ENCODE measurements at regions of chr12 and their contacts with region 1.

Region 1: DNA sequence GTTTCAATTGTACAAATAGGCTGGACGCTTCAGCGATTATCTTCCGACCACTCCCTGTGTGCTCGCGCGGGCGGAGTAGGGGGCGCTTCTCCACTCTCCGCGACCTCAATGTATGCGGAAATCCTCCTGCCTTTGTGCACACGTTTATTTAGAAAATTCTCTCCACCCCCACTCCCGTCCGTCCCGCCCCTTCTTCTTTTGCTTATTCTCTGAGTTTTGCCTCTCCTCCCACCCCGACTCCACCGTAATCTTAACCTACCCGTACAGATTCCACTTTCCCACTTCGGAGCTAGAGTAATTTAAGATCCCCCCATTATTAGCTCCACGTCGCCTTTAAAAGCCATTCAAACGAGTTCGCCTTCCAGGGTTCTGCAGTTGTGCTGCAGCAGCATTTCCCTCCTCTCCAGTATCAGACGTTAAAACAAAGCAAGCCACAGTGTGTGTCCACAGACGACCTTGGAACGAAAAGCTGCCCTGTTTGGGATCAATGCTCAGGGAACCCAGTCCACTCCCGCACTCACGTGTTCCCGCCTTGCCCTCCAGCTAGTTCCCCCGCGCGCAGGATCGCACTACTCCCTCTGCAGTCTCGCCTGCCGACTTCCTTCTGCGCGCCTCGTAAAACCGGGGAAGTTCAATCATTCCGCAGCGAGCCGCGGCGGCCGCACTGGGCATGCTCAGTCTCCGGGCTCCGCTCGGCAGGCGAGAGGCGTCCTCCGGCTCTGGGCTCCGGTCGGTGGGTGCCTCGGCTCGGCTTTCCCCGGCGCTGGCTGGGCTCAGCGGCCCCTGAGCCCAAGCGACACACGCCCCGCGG is at the start of gene ANO6:
- DNase-seq: peak; percentile 93
- H3K4me3 ChIP-seq: peak within 1 kb of the TSS; percentile 53 to 88 (median 86)
- H3K27ac ChIP-seq: peak within 1 kb of the TSS; percentile 76
- H3K4me1 ChIP-seq: peaks cover 14% of the 10 kb centered on the region
- H3K27me3 ChIP-seq: no peaks in the 10 kb centered on the region
- CTCF ChIP-seq: peak in 1 of 2 donors; percentile 38
- POLR2A ChIP-seq: peak; percentile 61
- total RNA-seq, gene ANO6: 67.6 and 70.1 TPM in 2 replicates

Region 2: DNA sequence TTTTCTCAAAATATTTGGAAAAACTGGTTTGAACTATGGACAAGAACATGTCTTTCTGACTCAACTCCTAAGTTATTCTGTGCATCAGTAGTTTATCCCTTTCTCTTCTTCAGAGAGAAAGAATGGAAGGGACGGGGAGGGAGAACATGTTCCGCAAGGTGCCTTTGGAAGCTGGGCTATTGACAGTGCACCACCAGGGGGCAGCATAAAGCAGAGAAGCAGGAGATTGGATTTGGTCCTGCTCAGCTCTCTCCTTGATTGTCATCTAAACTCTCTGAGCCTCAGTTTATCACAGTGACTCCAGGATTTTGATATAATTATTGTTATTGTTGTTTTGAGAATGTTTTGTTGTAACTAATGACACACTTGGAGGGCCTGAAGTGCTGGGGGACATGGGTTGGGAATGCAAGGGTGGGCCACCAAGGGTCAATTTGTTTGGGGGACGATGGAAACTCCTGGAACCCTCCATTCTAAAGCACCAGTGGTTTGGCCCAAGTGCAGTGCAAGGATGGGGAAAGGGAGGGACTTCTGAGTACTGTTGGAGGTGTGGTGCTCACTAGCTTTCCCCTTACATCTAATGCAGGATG is 45.1 kb before region 1 on chr12:
- CTCF ChIA-PET with region 1: interaction called, 31 read pairs
- POLR2A ChIA-PET with region 1: no interaction called
- dilution Hi-C with region 1: no loop called
- intact Hi-C with region 1: loop called (anchors 2 kb)
- DNase-seq: peak; percentile 74
- H3K4me3 ChIP-seq: no peak overlapping the region
- H3K27ac ChIP-seq: no peak overlapping the region
- H3K4me1 ChIP-seq: no peaks in the 10 kb centered on the region
- H3K27me3 ChIP-seq: peaks cover 0 to 5% of the 10 kb centered on the region in 2 experiments
- CTCF ChIP-seq: peak; percentile 86 to 90
- POLR2A ChIP-seq: no peak

Region 3: GRCh38 chr12:45183246-45183645 is 32.4 kb before region 1 on chr12:
- CTCF ChIA-PET with region 1: interaction called, 19 read pairs
- POLR2A ChIA-PET with region 1: no interaction called
- dilution Hi-C with region 1: no loop called
- intact Hi-C with region 1: no loop called
- DNase-seq: peak; percentile 51
- H3K4me3 ChIP-seq: no peak overlapping the region
- H3K27ac ChIP-seq: no peak overlapping the region
- H3K4me1 ChIP-seq: no peaks in the 10 kb centered on the region
- H3K27me3 ChIP-seq: no peaks in the 10 kb centered on the region
- CTCF ChIP-seq: peak in 1 of 2 donors; percentile 28
- POLR2A ChIP-seq: no peak

Region 4: GRCh38 chr12:45191239-45191638 is 24.4 kb before region 1 on chr12:
- CTCF ChIA-PET with region 1: interaction called, 5 read pairs
- POLR2A ChIA-PET with region 1: no interaction called
- dilution Hi-C with region 1: no loop called
- intact Hi-C with region 1: loop called (anchors 1 kb)
- DNase-seq: peak; percentile 35
- H3K4me3 ChIP-seq: no peak overlapping the region
- H3K27ac ChIP-seq: no peak overlapping the region
- H3K4me1 ChIP-seq: peaks cover 20% of the 10 kb centered on the region
- H3K27me3 ChIP-seq: no peaks in the 10 kb centered on the region
- CTCF ChIP-seq: no peak
- POLR2A ChIP-seq: no peak

Region 5: DNA sequence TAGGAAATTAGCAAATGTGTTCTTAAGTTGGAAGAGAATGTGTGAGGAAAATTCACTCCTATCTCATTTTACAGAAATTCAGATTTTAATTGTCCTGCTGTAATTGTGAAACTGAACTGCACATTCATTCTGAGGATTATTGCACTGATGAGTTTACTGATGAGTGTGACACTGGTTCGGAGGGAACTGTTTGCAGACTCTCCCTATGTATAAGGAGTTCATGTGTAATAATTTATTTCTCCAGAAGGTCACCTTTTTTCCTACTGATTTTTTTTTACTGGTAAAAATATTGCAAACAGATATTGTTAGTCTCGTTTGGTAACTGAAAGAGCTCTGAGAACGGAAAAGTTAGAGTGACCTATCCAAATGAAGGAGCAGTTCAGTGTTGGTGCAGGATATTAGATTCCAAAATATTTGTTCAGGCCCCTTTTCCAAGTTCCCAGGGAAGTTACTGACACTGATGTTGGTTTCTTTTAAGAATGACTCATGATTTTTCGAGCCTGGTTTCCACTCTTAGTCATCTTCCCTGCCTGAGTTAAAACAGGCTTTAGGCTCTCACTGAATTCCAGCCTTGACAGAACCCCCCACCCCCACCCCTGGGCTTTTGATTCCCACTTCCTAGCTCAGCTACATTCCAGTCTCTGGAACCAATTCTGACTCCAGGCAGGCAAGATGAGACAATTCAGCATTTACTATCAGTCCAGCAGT is 18.7 kb after region 1 on chr12:
- CTCF ChIA-PET with region 1: interaction called, 12 read pairs
- POLR2A ChIA-PET with region 1: interaction called, 4 read pairs
- dilution Hi-C with region 1: no loop called
- intact Hi-C with region 1: loop called (anchors 1 kb)
- DNase-seq: peak; percentile 98
- H3K4me3 ChIP-seq: peak overlapping the region in 1 of 3 experiments; percentile 20
- H3K27ac ChIP-seq: peak overlapping the region; percentile 100
- H3K4me1 ChIP-seq: peaks cover 52% of the 10 kb centered on the region
- H3K27me3 ChIP-seq: no peaks in the 10 kb centered on the region
- CTCF ChIP-seq: no peak
- POLR2A ChIP-seq: peak; percentile 34

Region 6: GRCh38 chr12:45284131-45284901 is 68.7 kb after region 1 on chr12:
- CTCF ChIA-PET with region 1: no interaction called
- POLR2A ChIA-PET with region 1: no interaction called
- dilution Hi-C with region 1: no loop called
- intact Hi-C with region 1: no loop called
- DNase-seq: peak; percentile 48
- H3K4me3 ChIP-seq: no peak overlapping the region
- H3K27ac ChIP-seq: peak overlapping the region; percentile 51
- H3K4me1 ChIP-seq: peaks cover 19% of the 10 kb centered on the region
- H3K27me3 ChIP-seq: no peaks in the 10 kb centered on the region
- CTCF ChIP-seq: peak in 1 of 2 donors; percentile 10
- POLR2A ChIP-seq: no peak

Region 7: DNA sequence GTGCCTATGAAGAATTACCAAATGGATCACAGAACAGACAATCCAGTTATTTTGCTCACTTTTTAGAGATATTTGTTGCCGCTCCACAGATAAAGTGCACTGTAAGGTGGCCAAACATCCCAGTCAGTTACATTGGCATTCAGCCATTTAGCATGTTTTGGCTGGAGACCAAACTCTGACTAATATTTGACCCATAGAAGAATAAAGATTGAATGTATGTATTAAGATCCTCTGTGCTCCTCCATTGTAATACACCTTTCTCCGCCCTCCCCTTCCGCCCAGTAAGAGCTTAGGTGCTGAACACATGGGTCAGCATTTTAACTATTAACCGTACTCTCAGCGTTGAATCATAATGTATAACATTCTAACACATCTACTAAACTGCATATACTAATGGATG is 163.6 kb after region 1 on chr12:
- CTCF ChIA-PET with region 1: interaction called, 4 read pairs
- POLR2A ChIA-PET with region 1: no interaction called
- dilution Hi-C with region 1: no loop called
- intact Hi-C with region 1: loop called (anchors 2 kb)
- DNase-seq: peak; percentile 89
- H3K4me3 ChIP-seq: no peak overlapping the region
- H3K27ac ChIP-seq: no peak overlapping the region
- H3K4me1 ChIP-seq: peaks cover 30% of the 10 kb centered on the region
- H3K27me3 ChIP-seq: no peaks in the 10 kb centered on the region
- CTCF ChIP-seq: no peak
- POLR2A ChIP-seq: no peak

Region 8: DNA sequence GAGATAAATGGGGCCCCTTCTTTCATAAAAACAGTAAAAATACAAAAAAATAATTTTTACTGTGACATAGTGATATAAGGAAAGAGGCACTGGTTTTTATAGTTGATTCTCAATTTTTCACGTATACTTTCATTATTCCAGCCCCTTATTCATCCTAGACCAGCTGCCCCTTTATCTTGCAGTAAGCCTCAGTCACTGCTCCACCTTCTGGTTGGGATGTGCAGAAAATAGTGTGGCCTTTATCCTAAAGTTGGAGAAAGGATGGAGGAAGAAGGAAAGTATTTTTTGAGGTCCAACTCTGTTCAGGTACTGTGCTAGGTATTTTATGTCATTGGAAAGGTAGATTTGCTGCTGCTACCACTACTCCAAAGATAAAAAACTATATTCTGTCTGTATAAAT is 172.9 kb after region 1 on chr12:
- CTCF ChIA-PET with region 1: interaction called, 36 read pairs
- POLR2A ChIA-PET with region 1: no interaction called
- dilution Hi-C with region 1: no loop called
- intact Hi-C with region 1: loop called (anchors 1 kb)
- DNase-seq: peak; percentile 58
- H3K4me3 ChIP-seq: no peak overlapping the region
- H3K27ac ChIP-seq: no peak overlapping the region
- H3K4me1 ChIP-seq: no peaks in the 10 kb centered on the region
- H3K27me3 ChIP-seq: no peaks in the 10 kb centered on the region
- CTCF ChIP-seq: peak; percentile 48 to 53
- POLR2A ChIP-seq: no peak

Region 9: GRCh38 chr12:45490213-45490873 is 274.7 kb after region 1 on chr12:
- CTCF ChIA-PET with region 1: no interaction called
- POLR2A ChIA-PET with region 1: no interaction called
- dilution Hi-C with region 1: no loop called
- intact Hi-C with region 1: no loop called
- DNase-seq: no peak
- H3K4me3 ChIP-seq: no peak overlapping the region
- H3K27ac ChIP-seq: no peak overlapping the region
- H3K4me1 ChIP-seq: no peaks in the 10 kb centered on the region
- H3K27me3 ChIP-seq: peaks cover 3 to 6% of the 10 kb centered on the region in 2 experiments
- CTCF ChIP-seq: no peak
- POLR2A ChIP-seq: no peak